Mammary epithelial cell (primary cell): ENCODE measurements at regions of chr11 and their contacts with region 1.

Region 1: GRCh38 chr11:121358760-121359159 is 66.2 kb downstream of the SC5D start:
- DNase-seq: peak; percentile 50
- H3K4me3 ChIP-seq: no peak overlapping the region
- H3K27ac ChIP-seq: no peak overlapping the region
- H3K4me1 ChIP-seq: peaks cover 9% of the 10 kb centered on the region
- H3K27me3 ChIP-seq: peaks cover 4% of the 10 kb centered on the region
- CTCF ChIP-seq: no peak

Region 2: GRCh38 chr11:121282886-121283502 is 75.8 kb before region 1 on chr11:
- CTCF ChIA-PET with region 1: no interaction called
- dilution Hi-C with region 1: no loop called
- in situ Hi-C with region 1: no loop called
- intact Hi-C with region 1: no loop called
- DNase-seq: no peak
- H3K4me3 ChIP-seq: no peak overlapping the region
- H3K27ac ChIP-seq: no peak overlapping the region
- H3K4me1 ChIP-seq: peaks cover 14% of the 10 kb centered on the region
- H3K27me3 ChIP-seq: no peaks in the 10 kb centered on the region
- CTCF ChIP-seq: no peak

Region 3: DNA sequence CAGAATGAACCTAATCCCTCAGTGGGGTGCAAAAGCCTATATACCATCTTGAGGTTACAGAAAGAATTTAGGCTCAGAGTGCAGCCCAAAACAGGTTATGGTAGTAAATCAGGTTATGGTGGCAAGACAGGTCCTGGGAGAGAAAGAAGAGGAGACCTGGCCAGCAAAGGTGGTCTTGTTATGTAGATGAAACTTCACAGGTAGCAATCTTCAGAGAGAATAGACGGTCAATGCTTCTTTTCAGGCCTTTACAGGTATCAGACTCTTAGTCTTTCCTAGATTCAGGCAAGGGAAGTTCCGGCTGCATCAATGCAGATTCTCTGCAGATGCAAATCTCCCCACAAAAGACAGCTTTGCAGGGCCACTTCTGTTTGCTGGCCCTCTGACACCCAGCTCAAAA is 47.5 kb after region 1 on chr11:
- CTCF ChIA-PET with region 1: no interaction called
- dilution Hi-C with region 1: no loop called
- in situ Hi-C with region 1: no loop called
- intact Hi-C with region 1: no loop called
- DNase-seq: no peak
- H3K4me3 ChIP-seq: no peak overlapping the region
- H3K27ac ChIP-seq: no peak overlapping the region
- H3K4me1 ChIP-seq: no peaks in the 10 kb centered on the region
- H3K27me3 ChIP-seq: no peaks in the 10 kb centered on the region
- CTCF ChIP-seq: no peak

Region 4: GRCh38 chr11:121417055-121417551 is 58.3 kb after region 1 on chr11:
- CTCF ChIA-PET with region 1: no interaction called
- dilution Hi-C with region 1: no loop called
- in situ Hi-C with region 1: no loop called
- intact Hi-C with region 1: loop called (anchors 5 kb)
- DNase-seq: peak; percentile 83
- H3K4me3 ChIP-seq: no peak overlapping the region
- H3K27ac ChIP-seq: no peak overlapping the region
- H3K4me1 ChIP-seq: peaks cover 13% of the 10 kb centered on the region
- H3K27me3 ChIP-seq: peaks cover 4% of the 10 kb centered on the region
- CTCF ChIP-seq: no peak